ENCODE measurements at regions of chr1 and their contacts with region 1.

Region 1: GRCh38 chr1:219576931-219577730 is 35.8 kb downstream of the ZC3H11B start:
- DNase-seq: no peak
- ATAC-seq: no peak
- H3K4me3 ChIP-seq: no peak overlapping the region
- H3K27ac ChIP-seq: no peak overlapping the region
- H3K4me1 ChIP-seq: no peaks in the 10 kb centered on the region
- H3K27me3 ChIP-seq: no peaks in the 10 kb centered on the region
- CTCF ChIP-seq: no peak

Region 2: DNA sequence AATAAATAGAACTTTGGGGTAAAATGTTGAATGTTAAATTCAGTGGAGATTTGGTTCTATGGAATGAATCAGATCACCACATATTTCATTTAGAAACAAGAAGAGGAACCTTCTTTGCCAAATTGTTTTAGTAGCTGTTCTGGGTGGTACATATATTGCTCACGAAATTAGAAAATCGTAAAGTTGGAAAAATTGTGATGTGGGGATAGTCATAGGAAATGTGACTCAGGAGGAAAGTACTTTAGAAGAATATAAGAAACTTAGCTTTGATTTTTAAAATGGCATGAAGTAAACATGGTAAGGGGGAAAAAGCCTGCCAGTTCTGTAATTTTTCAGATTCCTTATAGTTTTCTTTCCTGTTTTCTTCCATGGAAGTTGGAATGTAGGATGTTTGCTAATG is 1264.6 kb before region 1 on chr1:
- intact Hi-C with region 1: loop called in 1 of 2 experiments (anchors 10 kb)
- DNase-seq: no peak
- ATAC-seq: no peak
- H3K4me3 ChIP-seq: no peak overlapping the region
- H3K27ac ChIP-seq: no peak overlapping the region
- H3K4me1 ChIP-seq: no peaks in the 10 kb centered on the region
- H3K27me3 ChIP-seq: no peaks in the 10 kb centered on the region
- CTCF ChIP-seq: no peak

Region 3: DNA sequence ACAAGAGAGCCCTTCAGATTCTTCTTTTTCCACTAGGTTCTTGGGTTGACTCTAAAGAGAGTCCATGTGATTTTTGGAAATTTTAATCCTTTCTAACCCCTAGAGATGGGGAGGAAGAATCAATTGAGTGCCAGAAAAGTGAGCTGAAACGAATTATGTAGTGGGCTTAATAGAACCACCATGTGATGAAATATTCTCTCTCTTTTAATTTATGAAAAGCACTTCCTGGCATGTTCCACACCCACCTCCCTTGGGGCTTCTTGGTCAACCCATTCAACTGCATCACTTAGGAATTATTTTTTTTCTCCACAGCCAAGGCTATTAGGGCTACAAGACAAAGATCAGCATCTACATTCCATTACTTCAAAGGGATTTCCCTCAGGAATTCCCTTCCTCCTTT is 43.8 kb before region 1 on chr1:
- intact Hi-C with region 1: no loop called
- DNase-seq: peak; percentile 39 to 65
- ATAC-seq: peak; percentile 30 to 64 (median 60)
- H3K4me3 ChIP-seq: no peak overlapping the region
- H3K27ac ChIP-seq: no peak overlapping the region
- H3K4me1 ChIP-seq: no peaks in the 10 kb centered on the region
- H3K27me3 ChIP-seq: no peaks in the 10 kb centered on the region
- CTCF ChIP-seq: no peak

Region 4: DNA sequence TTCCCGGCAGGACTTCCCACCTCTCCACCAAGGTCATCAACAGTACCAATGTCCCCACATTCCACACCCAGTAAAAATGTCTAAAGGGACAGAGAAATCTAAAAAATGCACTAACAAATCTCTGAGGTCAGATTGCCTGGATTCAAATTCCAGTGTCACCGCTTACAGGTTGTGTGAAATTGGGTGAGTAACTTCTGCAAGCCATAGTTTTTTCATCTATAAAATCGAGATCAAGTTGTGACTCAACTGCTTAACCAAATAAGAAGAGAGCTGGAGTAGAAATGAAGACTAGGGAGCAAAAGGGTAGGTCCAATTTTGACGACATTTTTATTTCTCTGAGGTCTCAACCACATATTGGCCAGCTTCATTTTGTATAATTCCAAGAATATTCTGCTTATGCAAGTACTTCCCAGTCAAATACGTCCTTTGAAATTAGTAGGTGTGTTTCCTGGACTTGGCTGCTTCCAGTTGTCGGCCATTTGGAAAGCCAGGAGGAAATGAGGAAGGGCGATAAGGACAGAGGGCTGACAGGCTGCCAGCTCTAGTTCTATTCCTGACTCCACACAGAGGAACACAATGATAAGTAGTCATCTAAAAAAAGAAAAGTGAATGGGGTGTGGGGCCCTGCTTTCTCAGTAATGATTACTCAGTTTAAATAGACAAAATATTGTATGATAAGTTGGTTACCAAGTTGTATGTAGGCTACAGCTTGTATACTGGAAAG is 93.5 kb after region 1 on chr1:
- intact Hi-C with region 1: no loop called
- DNase-seq: peak in 1 of 2 donors; percentile 47
- ATAC-seq: peak; percentile 21 to 80 (median 76)
- H3K4me3 ChIP-seq: no peak overlapping the region
- H3K27ac ChIP-seq: no peak overlapping the region
- H3K4me1 ChIP-seq: no peaks in the 10 kb centered on the region
- H3K27me3 ChIP-seq: no peaks in the 10 kb centered on the region
- CTCF ChIP-seq: no peak

Region 5: GRCh38 chr1:220099826-220100225 is 522.7 kb after region 1 on chr1:
- intact Hi-C with region 1: no loop called
- DNase-seq: no peak
- ATAC-seq: no peak
- H3K4me3 ChIP-seq: no peak overlapping the region
- H3K27ac ChIP-seq: no peak overlapping the region
- H3K4me1 ChIP-seq: peaks cover 12% of the 10 kb centered on the region
- H3K27me3 ChIP-seq: no peaks in the 10 kb centered on the region
- CTCF ChIP-seq: no peak